WTC11 (cell line): ENCODE measurements at regions of chr12 and their contacts with region 1.

Region 1: DNA sequence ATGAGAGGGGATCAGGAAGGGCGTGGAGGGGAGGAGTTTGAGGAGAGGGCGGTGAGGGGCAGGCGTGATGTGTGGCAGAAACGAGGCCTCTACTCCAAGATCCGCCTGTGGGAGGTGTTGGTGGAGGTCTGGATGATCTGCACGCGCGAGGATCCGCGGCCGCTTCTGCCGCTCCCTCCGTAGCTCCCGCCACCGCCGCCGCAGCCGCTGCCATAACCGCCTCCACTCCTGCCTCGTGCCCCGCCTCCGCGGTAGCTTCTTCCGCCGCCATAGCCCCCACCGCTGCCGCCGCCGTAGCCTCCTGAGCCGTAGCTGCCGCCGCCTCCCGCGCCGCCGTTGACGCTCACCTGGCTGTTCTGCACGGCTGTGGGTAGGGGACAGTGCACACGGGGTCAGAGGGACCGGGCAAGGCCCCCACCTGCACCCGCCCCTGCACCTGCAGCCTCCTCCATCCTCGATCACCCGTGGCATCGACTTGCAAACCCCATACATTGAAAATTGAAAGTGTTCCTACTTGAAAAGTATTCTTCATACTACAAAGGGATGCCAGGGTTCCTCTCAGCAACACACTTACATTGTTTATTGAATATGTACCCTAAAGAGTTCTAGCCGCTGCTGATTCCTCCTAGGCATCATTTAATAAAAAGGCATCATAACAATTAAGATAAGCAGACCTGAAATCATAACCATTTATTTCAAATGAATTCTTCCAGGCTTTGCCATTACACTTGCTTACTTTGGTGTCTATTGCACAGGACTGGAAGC is 11.1 kb upstream of the KRT1 start:
- DNase-seq: peak; percentile 63
- ATAC-seq: peak; percentile 65
- H3K4me3 Mint-ChIP-seq: peak overlapping the region; percentile 68
- H3K27ac Mint-ChIP-seq: no peak overlapping the region
- H3K4me1 Mint-ChIP-seq: peaks cover 14% of the 10 kb centered on the region
- H3K27me3 Mint-ChIP-seq: peaks cover 47% of the 10 kb centered on the region
- CTCF ChIP-seq: no peak

Region 2: DNA sequence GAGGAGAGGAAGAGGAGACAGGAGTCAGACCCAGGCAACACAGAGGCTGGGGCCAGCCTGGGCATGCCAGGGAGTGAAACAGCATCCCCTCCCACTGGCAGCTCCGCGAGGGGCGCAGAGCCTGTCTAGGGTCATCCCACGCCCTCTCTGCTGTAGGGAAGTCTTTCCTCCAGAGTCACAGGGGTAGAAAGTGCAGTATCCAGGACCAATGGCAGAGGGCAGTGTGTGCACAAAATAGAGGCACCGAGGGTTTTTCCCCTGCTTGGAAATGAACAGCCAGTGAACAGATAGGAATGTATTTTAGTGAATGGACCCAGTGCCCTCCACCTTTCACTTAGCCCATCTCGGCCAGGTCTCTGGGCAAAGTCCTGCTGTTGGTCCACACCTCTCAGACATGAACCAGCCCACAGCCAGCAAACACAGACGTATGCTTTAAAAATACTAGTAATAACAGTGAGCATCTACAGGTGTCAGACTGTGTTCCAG is 108.2 kb before region 1 on chr12:
- CTCF ChIA-PET with region 1: interaction called, 12 read pairs
- POLR2A ChIA-PET with region 1: no interaction called
- DNase-seq: peak; percentile 74
- ATAC-seq: peak; percentile 97
- H3K4me3 Mint-ChIP-seq: no peak overlapping the region; the same call in 1 of the 2 replicates
- H3K27ac Mint-ChIP-seq: no peak overlapping the region
- H3K4me1 Mint-ChIP-seq: peaks cover 6% of the 10 kb centered on the region
- H3K27me3 Mint-ChIP-seq: no peaks in the 10 kb centered on the region
- CTCF ChIP-seq: no peak; the same call in none of the 2 replicates

Region 3: DNA sequence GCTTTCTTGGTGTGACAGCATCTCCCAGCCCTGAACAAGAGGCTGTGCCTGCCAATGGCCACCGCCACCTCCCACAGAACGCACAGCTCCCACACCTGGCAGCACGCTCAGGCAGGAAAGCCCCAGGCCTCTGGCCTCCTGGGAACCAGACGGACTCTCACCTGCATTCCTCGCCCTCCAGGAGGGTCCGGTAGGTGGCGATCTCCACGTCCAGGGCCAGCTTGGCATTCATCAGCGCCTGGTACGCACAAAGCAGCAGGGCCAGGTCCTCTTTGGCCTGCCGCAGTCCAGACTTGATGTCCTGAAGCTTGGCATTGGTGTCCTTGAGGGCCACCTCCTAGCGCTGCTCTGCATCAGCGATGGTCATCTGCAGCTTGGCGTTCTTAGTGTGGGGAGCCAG is 24.2 kb after region 1 on chr12:
- CTCF ChIA-PET with region 1: interaction called, 38 read pairs
- POLR2A ChIA-PET with region 1: no interaction called
- DNase-seq: peak; percentile 75
- ATAC-seq: peak; percentile 62
- H3K4me3 Mint-ChIP-seq: peak overlapping the region; percentile 47
- H3K27ac Mint-ChIP-seq: no peak overlapping the region
- H3K4me1 Mint-ChIP-seq: 0 out of 2 replicates have a peak, but pooled peaks cover 6% of the 10 kb centered on the region
- H3K27me3 Mint-ChIP-seq: peaks cover 53% of the 10 kb centered on the region
- CTCF ChIP-seq: no peak

Region 4: DNA sequence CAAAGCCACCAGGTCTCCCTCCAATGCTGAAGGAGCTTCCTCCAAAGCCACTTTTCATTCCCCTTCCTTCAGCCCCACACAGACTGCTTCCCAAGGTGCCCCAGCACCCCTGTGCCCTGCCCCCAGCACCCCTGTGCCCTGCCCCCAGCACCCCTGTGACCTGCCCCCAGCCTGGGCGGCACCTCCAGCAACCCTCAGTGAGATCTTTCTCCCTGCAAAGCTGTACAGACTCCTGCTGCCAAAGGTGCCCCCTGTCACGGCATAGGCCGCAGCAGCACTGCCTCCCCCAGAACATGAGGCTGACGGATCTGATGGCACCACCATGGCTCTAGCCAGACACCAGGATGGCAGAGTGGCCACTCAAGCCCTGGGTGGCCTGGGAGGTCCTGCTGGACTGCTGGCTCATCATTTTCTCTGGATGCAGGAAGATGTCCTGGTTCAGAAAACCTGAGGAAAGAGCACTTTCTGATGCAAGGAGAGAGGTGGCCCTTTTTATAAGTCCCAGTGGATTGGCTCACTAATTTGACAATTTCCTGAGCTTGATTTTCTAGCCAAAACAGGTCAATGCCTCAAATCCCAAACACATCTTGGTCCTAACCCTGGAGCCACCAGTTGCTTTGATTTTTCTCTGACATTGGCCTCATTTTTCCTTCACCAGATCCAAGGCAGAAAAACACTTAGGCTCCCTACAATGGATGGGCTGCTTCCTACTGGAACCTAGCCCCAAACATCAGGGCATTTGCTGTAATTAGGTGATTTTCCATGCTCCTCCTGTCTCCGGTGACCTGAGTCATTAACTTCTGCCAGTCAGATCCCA is 44.8 kb after region 1 on chr12:
- CTCF ChIA-PET with region 1: no interaction called
- POLR2A ChIA-PET with region 1: no interaction called
- DNase-seq: no peak
- ATAC-seq: no peak
- H3K4me3 Mint-ChIP-seq: no peak overlapping the region
- H3K27ac Mint-ChIP-seq: no peak overlapping the region
- H3K4me1 Mint-ChIP-seq: no peaks in the 10 kb centered on the region
- H3K27me3 Mint-ChIP-seq: peaks cover 18% of the 10 kb centered on the region
- CTCF ChIP-seq: no peak